CD8-positive, alpha-beta T cell (primary cell): ENCODE measurements at regions of chr17 and their contacts with region 1.

Region 1: DNA sequence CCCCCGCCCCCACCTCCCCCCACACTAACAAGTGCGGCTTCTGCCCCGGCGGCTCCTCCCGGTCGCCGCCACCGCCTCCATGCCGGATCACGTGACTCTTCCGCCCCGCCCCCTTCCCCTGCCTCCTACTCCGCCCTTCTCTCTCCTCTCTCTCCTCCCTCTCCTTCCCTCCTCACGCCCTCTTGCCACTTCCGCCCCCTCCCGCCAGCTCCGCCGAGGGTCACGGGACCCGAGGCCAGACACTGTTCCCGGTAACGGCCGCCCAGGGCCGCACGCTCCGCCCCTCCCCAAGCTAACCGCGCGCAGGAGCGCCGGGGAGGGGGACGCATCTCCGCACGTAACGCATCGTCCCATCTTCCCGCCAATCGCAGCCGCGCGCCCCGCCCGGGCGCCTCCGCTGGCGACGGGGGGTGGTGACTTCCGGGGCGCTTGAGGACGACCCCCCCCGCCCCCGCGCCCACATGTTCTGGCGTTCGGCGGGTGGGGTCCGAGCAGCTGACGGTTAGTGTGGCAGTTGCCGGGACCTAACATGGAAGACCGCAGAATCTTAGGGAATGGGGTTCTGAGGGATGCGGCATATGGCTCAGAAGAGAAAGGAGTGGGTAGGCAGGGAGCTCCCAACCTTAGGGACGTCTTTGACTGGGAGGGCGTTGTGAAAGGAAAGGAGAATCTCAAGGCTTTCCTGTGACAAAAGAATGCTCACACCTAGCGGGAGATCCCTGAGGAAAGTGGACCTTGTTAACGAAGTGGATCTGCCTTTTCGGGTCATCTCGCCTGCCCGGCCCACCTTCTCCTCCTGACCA is at the start of gene USP32:
- DNase-seq: peak; percentile 93 to 99 (median 97)
- ATAC-seq: peak; percentile 87
- H3K4me3 ChIP-seq: peak within 1 kb of the TSS; percentile 86 to 93
- H3K4me3 Mint-ChIP-seq: peak within 1 kb of the TSS; percentile 95
- H3K27ac ChIP-seq: peak within 1 kb of the TSS; percentile 89 to 90
- H3K27ac Mint-ChIP-seq: peak within 1 kb of the TSS; percentile 93
- H3K4me1 ChIP-seq: peaks cover 18% of the 10 kb centered on the region
- H3K4me1 Mint-ChIP-seq: peaks cover 38% of the 10 kb centered on the region
- H3K27me3 ChIP-seq: no peaks in the 10 kb centered on the region
- H3K27me3 Mint-ChIP-seq: no peaks in the 10 kb centered on the region
- CTCF ChIP-seq: no peak
- total RNA-seq, gene USP32: 24.7 to 26.3 TPM

Region 2: GRCh38 chr17:59707114-59707970 is 684.9 kb before region 1 on chr17 and contains the starts of genes PTRH2 and VMP1:
- CTCF ChIA-PET with region 1: no interaction called
- POLR2A ChIA-PET with region 1: no interaction called
- intact Hi-C with region 1: loop called in 1 of 2 experiments (anchors 10 kb)
- DNase-seq: peak; percentile 72 to 97 (median 87)
- ATAC-seq: peak; percentile 93
- H3K4me3 ChIP-seq: peak within 1 kb of the TSS; percentile 72 to 80
- H3K4me3 Mint-ChIP-seq: peak within 1 kb of the TSS; percentile 95
- H3K27ac ChIP-seq: peak within 1 kb of the TSS; percentile 80 to 94
- H3K27ac Mint-ChIP-seq: peak within 1 kb of the TSS; percentile 97
- H3K4me1 ChIP-seq: peaks cover 36% of the 10 kb centered on the region
- H3K4me1 Mint-ChIP-seq: peaks cover 63% of the 10 kb centered on the region
- H3K27me3 ChIP-seq: no peaks in the 10 kb centered on the region
- H3K27me3 Mint-ChIP-seq: no peaks in the 10 kb centered on the region
- CTCF ChIP-seq: no peak
- total RNA-seq, gene PTRH2: 6.1 to 7.6 TPM
- total RNA-seq, gene VMP1: 56.8 to 66.2 TPM

Region 3: GRCh38 chr17:60077672-60078519 is 314.3 kb before region 1 on chr17:
- CTCF ChIA-PET with region 1: no interaction called
- POLR2A ChIA-PET with region 1: no interaction called
- intact Hi-C with region 1: loop called in 1 of 2 experiments (anchors 2 kb)
- DNase-seq: peak in 2 of 9 experiments; percentile 49 to 51
- ATAC-seq: peak; percentile 66
- H3K4me3 ChIP-seq: peak overlapping the region; percentile 69 to 83
- H3K4me3 Mint-ChIP-seq: peak overlapping the region; percentile 89
- H3K27ac ChIP-seq: peak overlapping the region; percentile 41 to 64
- H3K27ac Mint-ChIP-seq: peak overlapping the region; percentile 87
- H3K4me1 ChIP-seq: peaks cover 7% of the 10 kb centered on the region
- H3K4me1 Mint-ChIP-seq: peaks cover 24% of the 10 kb centered on the region
- H3K27me3 ChIP-seq: no peaks in the 10 kb centered on the region
- H3K27me3 Mint-ChIP-seq: no peaks in the 10 kb centered on the region
- CTCF ChIP-seq: no peak

Region 4: GRCh38 chr17:60244656-60245055 is 147.6 kb before region 1 on chr17:
- CTCF ChIA-PET with region 1: no interaction called
- POLR2A ChIA-PET with region 1: no interaction called
- intact Hi-C with region 1: no loop called
- DNase-seq: no peak
- ATAC-seq: no peak
- H3K4me3 ChIP-seq: no peak overlapping the region
- H3K4me3 Mint-ChIP-seq: no peak overlapping the region
- H3K27ac ChIP-seq: no peak overlapping the region
- H3K27ac Mint-ChIP-seq: no peak overlapping the region
- H3K4me1 ChIP-seq: no peaks in the 10 kb centered on the region
- H3K4me1 Mint-ChIP-seq: no peaks in the 10 kb centered on the region
- H3K27me3 ChIP-seq: no peaks in the 10 kb centered on the region
- H3K27me3 Mint-ChIP-seq: no peaks in the 10 kb centered on the region
- CTCF ChIP-seq: no peak

Region 5: DNA sequence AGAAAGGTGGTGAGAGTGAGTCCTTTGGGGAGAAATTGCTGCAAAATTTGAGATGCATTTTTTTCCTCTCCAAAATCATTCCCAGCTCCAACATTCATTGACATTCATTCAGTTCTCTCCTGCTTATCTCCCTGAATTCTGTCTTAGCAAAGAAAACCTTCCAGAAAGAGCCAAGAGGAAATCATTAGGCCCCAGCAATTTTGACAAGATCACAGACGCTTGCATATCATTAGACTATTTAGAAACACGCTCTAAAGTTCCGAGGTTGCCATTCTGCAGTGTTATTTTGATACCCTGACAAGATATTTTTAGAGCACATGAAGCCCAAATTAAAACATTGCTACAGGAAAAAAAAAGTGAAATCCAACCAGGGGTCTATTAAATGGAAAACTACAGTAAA is 20.5 kb after region 1 on chr17:
- CTCF ChIA-PET with region 1: no interaction called
- POLR2A ChIA-PET with region 1: no interaction called
- intact Hi-C with region 1: no loop called
- DNase-seq: no peak
- ATAC-seq: no peak
- H3K4me3 ChIP-seq: no peak overlapping the region
- H3K4me3 Mint-ChIP-seq: no peak overlapping the region
- H3K27ac ChIP-seq: no peak overlapping the region
- H3K27ac Mint-ChIP-seq: no peak overlapping the region
- H3K4me1 ChIP-seq: no peaks in the 10 kb centered on the region
- H3K4me1 Mint-ChIP-seq: no peaks in the 10 kb centered on the region
- H3K27me3 ChIP-seq: no peaks in the 10 kb centered on the region
- H3K27me3 Mint-ChIP-seq: peaks cover 2% of the 10 kb centered on the region
- CTCF ChIP-seq: no peak

Region 6: GRCh38 chr17:60525685-60526514 is 133.7 kb after region 1 on chr17 and contains the start of gene APPBP2:
- CTCF ChIA-PET with region 1: no interaction called
- POLR2A ChIA-PET with region 1: no interaction called
- intact Hi-C with region 1: loop called (anchors 1 kb)
- DNase-seq: peak; percentile 37 to 89 (median 73)
- ATAC-seq: peak; percentile 86
- H3K4me3 ChIP-seq: peak within 1 kb of the TSS; percentile 85 to 86
- H3K4me3 Mint-ChIP-seq: peak within 1 kb of the TSS; percentile 99
- H3K27ac ChIP-seq: peak within 1 kb of the TSS; percentile 95 to 96
- H3K27ac Mint-ChIP-seq: peak within 1 kb of the TSS; percentile 98
- H3K4me1 ChIP-seq: peaks cover 29% of the 10 kb centered on the region
- H3K4me1 Mint-ChIP-seq: peaks cover 53% of the 10 kb centered on the region
- H3K27me3 ChIP-seq: no peaks in the 10 kb centered on the region
- H3K27me3 Mint-ChIP-seq: no peaks in the 10 kb centered on the region
- CTCF ChIP-seq: no peak
- total RNA-seq, gene APPBP2: 19.9 to 20.1 TPM

Region 7: DNA sequence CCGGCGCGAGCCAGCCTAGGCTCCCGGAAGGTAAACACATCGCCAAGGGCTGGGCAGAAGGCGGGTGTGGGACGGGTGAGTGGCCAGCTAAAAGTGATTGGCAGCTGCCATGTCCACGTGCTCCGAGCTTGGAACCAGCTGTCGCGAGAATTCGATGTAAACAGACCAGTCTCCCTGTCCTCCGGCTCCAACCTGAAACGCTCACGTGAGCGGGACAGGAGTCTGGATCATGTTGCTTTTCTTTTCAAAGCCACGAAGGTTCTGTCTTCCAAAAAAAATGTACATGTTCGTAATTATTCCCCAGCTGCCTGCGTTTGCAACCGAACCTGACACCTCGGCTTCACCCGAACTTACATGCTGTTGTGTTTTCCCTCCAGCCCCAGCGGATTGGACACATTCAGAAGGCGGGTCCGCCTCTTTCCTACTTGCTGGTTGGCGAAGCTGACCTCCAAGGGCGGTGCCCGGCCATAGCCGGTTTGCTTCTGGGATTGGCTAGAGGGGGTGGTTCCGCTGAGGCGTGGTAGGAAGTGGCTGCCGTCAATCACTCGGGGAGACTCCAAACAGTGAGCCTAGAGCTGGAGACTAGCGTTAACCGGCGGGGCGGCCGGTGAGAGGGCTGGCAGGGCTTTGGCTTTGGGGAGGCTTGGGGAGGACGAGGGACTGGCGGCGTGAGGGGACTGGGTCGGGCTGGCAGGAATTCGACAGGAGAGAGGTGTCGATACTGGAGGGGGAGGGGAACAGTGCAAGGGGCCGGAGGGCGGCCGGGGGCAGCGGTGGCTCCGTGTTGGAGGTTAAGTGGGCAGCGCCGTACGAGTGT is 285.3 kb after region 1 on chr17 and contains the start of gene BCAS3:
- CTCF ChIA-PET with region 1: no interaction called
- POLR2A ChIA-PET with region 1: interaction called, 9 read pairs
- intact Hi-C with region 1: loop called in 1 of 2 experiments (anchors 1 kb)
- DNase-seq: peak; percentile 92 to 98 (median 96)
- ATAC-seq: peak; percentile 95
- H3K4me3 ChIP-seq: peak within 1 kb of the TSS; percentile 75 to 76
- H3K4me3 Mint-ChIP-seq: peak within 1 kb of the TSS; percentile 97
- H3K27ac ChIP-seq: peak within 1 kb of the TSS; percentile 58 to 74
- H3K27ac Mint-ChIP-seq: peak within 1 kb of the TSS; percentile 98
- H3K4me1 ChIP-seq: peaks cover 11% of the 10 kb centered on the region
- H3K4me1 Mint-ChIP-seq: peaks cover 22% of the 10 kb centered on the region
- H3K27me3 ChIP-seq: no peaks in the 10 kb centered on the region
- H3K27me3 Mint-ChIP-seq: no peaks in the 10 kb centered on the region
- CTCF ChIP-seq: no peak
- total RNA-seq, gene BCAS3: 17.3 to 20.3 TPM